ENCODE measurements at regions of chr11 and their contacts with region 1.

Region 1: GRCh38 chr11:128157423-128158298 is 429.7 kb downstream of the ETS1 start:
- DNase-seq: peak; percentile 79 to 89 (median 85)
- H3K4me3 ChIP-seq: peak overlapping the region in 6 of 7 experiments; percentile 31 to 69 (median 50)
- H3K27ac ChIP-seq: no peak overlapping the region
- H3K4me1 ChIP-seq: no peaks in the 10 kb centered on the region
- H3K27me3 ChIP-seq: peaks cover 0 to 2% (median 0%) of the 10 kb centered on the region in 5 experiments

Region 2: DNA sequence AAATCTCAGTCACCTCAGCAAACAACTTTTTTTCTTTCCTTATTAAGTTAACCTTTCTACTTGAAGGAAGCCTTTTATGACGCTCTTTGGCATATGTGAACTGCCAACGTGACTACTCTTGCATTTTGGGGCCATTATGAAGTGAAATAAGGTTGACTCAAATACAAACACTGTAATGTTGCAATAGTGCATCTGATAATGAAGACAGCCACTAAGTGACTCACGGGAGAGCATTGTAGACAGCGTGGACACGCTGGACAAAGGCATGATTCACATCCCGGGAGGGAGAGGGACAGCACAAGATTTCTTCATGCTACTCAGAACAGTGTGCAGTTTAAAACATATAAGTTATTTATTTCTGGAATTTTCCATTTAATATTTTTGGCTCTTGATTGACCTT is 131.1 kb before region 1 on chr11:
- CTCF ChIA-PET with region 1: interaction called, 31 read pairs
- POLR2A ChIA-PET with region 1: no interaction called
- DNase-seq: no peak
- H3K4me3 ChIP-seq: no peak overlapping the region
- H3K27ac ChIP-seq: no peak overlapping the region
- H3K4me1 ChIP-seq: no peaks in the 10 kb centered on the region
- H3K27me3 ChIP-seq: peaks cover 0 to 2% (median 0%) of the 10 kb centered on the region in 5 experiments

Region 3: GRCh38 chr11:128130052-128130451 is 27.6 kb before region 1 on chr11:
- CTCF ChIA-PET with region 1: interaction called, 19 read pairs
- POLR2A ChIA-PET with region 1: no interaction called
- DNase-seq: no peak
- H3K4me3 ChIP-seq: no peak overlapping the region
- H3K27ac ChIP-seq: no peak overlapping the region
- H3K4me1 ChIP-seq: no peaks in the 10 kb centered on the region
- H3K27me3 ChIP-seq: no peaks in the 10 kb centered on the region

Region 4: DNA sequence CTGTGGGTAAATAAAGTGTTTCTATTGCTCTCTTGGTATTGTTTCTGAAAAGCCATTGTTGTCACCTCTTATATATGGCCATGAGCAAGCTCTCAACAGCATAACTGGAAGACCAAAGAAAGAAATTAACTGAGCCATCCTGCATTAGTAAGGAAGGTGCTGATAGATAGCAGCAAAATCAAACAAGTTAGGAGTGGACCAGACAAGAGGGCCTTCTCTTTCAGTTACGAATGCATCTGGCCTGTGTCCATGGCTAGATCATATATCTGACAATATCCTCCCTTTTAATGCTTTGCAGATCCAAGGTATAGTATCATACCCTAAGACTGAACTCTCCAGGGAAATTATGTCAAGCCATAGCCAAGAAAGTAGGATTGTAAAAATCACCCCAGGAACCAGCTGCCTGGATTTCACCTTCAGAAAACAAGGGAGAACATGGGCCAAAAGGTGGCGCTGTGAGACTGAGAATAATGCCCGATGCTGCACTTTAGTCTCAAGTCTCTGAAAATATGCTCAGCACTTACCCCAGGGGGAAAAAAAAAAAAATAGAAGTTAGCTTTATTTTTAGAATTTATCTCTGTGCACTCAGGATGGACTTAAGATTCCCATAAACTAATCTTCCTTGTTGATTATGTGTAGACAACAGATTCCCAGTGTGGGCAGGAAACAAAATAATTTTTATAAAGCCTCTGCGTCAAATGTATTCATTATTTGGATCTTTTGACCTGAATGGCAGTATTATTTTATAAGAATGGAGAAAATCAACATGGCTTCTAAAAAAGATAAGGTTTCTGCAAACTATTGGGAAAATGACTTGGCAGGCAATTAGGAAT is 14.6 kb after region 1 on chr11:
- CTCF ChIA-PET with region 1: interaction called, 96 read pairs
- POLR2A ChIA-PET with region 1: no interaction called
- DNase-seq: peak; percentile 83 to 92 (median 88)
- H3K4me3 ChIP-seq: no peak overlapping the region
- H3K27ac ChIP-seq: no peak overlapping the region
- H3K4me1 ChIP-seq: no peaks in the 10 kb centered on the region
- H3K27me3 ChIP-seq: no peaks in the 10 kb centered on the region

Region 5: GRCh38 chr11:128204898-128205297 is 47.2 kb after region 1 on chr11:
- CTCF ChIA-PET with region 1: no interaction called
- POLR2A ChIA-PET with region 1: no interaction called
- DNase-seq: no peak
- H3K4me3 ChIP-seq: no peak overlapping the region
- H3K27ac ChIP-seq: no peak overlapping the region
- H3K4me1 ChIP-seq: peaks cover 0 to 9% (median 1%) of the 10 kb centered on the region in 4 experiments
- H3K27me3 ChIP-seq: no peaks in the 10 kb centered on the region

Region 6: DNA sequence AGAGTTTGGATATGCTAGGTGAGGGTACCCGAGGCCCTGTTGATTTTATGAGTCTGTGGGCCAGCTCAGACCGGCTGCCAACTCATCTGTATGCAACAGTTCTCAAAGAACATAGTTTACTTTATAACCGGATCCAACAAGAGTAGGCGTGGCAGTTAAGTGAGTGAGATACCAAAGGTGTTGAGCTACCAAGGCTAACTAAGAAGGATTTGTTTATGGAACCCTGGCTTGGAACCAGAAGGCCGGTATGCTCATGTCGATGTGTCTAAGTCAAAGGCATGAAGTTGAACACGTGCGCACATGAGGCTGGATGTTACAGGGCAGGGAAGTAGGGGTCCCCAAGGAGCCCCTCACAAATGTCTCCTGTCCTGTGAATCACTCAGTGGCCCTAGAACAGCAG is 709.6 kb after region 1 on chr11 and contains the start of gene KCNJ1:
- CTCF ChIA-PET with region 1: interaction called, 11 read pairs
- POLR2A ChIA-PET with region 1: no interaction called
- DNase-seq: peak in 2 of 3 donors; percentile 71 to 82
- H3K4me3 ChIP-seq: no peak within 1 kb of the TSS
- H3K27ac ChIP-seq: no peak within 1 kb of the TSS
- H3K4me1 ChIP-seq: no peaks in the 10 kb centered on the region
- H3K27me3 ChIP-seq: peaks cover 0 to 9% (median 0%) of the 10 kb centered on the region in 5 experiments